Ascending aorta (tissue), 2 donors: ENCODE measurements at regions of chr10 and their contacts with region 1.

Region 1: GRCh38 chr10:63720072-63720537 is 198.9 kb downstream of the REEP3 start:
- DNase-seq: no peak
- H3K4me3 ChIP-seq: peak overlapping the region in 1 of 2 donors; percentile 16
- H3K27ac ChIP-seq: peak overlapping the region; percentile 86 to 91
- H3K4me1 ChIP-seq: peaks cover 0 to 14% of the 10 kb centered on the region in 2 donors
- H3K27me3 ChIP-seq: no peaks in the 10 kb centered on the region
- CTCF ChIP-seq: peak; percentile 87 to 99 (median 97)

Region 2: GRCh38 chr10:63166742-63167258 is 553.3 kb before region 1 on chr10:
- intact Hi-C with region 1: loop called (anchors 2 kb)
- DNase-seq: no peak
- H3K4me3 ChIP-seq: no peak overlapping the region
- H3K27ac ChIP-seq: no peak overlapping the region
- H3K4me1 ChIP-seq: no peaks in the 10 kb centered on the region
- H3K27me3 ChIP-seq: no peaks in the 10 kb centered on the region
- CTCF ChIP-seq: peak; percentile 61 to 90 (median 88)

Region 3: GRCh38 chr10:63217120-63217605 is 502.9 kb before region 1 on chr10:
- intact Hi-C with region 1: loop called (anchors 5 kb)
- DNase-seq: no peak
- H3K4me3 ChIP-seq: no peak overlapping the region
- H3K27ac ChIP-seq: no peak overlapping the region
- H3K4me1 ChIP-seq: no peaks in the 10 kb centered on the region
- H3K27me3 ChIP-seq: no peaks in the 10 kb centered on the region
- CTCF ChIP-seq: peak; percentile 49 to 70 (median 56)

Region 4: GRCh38 chr10:63767138-63767801 is 47.2 kb after region 1 on chr10:
- intact Hi-C with region 1: loop called (anchors 2 kb)
- DNase-seq: no peak
- H3K4me3 ChIP-seq: no peak overlapping the region
- H3K27ac ChIP-seq: peak overlapping the region; percentile 15 to 54
- H3K4me1 ChIP-seq: peaks cover 5 to 14% of the 10 kb centered on the region in 2 donors
- H3K27me3 ChIP-seq: no peaks in the 10 kb centered on the region
- CTCF ChIP-seq: peak; percentile 37 to 46 (median 45)

Region 5: GRCh38 chr10:63798599-63799498 is 78.7 kb after region 1 on chr10:
- intact Hi-C with region 1: loop called (anchors 1 kb)
- DNase-seq: peak; percentile 58 to 91
- H3K4me3 ChIP-seq: peak overlapping the region in 1 of 2 donors; percentile 35
- H3K27ac ChIP-seq: peak overlapping the region; percentile 73 to 74
- H3K4me1 ChIP-seq: peaks cover 5 to 18% of the 10 kb centered on the region in 2 donors
- H3K27me3 ChIP-seq: no peaks in the 10 kb centered on the region
- CTCF ChIP-seq: peak in 1 of 3 experiments; percentile 24

Region 6: GRCh38 chr10:63819753-63820329 is 99.7 kb after region 1 on chr10:
- intact Hi-C with region 1: loop called (anchors 2 kb)
- DNase-seq: peak in 1 of 2 donors; percentile 81
- H3K4me3 ChIP-seq: no peak overlapping the region
- H3K27ac ChIP-seq: no peak overlapping the region
- H3K4me1 ChIP-seq: no peaks in the 10 kb centered on the region
- H3K27me3 ChIP-seq: no peaks in the 10 kb centered on the region
- CTCF ChIP-seq: peak; percentile 46 to 79 (median 74)

Region 7: DNA sequence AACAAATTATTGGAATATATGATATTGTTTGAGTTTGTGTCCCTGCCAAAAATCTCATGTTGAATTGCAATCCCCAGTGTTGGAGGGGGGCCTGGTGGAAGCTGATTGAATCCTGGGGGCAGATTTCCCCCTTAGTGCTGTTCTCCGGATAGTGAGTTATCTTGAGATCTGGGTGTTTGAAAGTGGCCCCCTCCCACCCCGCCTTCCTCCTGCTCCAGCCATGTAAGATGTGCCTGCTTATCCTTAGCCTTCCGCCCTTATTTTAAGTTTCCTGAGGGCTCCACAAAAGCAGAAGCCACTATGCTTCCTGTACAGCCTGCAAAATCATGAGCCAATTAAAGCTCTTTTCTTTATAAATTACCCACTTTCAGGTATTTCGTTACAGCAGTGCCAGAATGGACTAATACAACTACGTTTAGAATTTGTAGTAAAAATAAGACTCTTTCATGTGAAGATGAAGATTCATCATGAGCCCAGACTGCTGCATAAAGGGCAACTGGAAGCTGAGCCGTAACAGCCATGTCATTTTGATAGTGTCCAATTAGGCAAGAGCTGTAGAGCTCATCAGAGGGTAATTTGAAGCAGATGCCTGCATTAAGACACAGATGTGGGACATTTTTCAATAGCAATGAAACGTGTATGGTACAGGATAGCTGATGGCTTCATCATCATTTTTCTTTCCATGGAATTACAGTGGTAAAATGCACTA is 808.3 kb after region 1 on chr10:
- intact Hi-C with region 1: no loop called
- DNase-seq: no peak
- H3K4me3 ChIP-seq: no peak overlapping the region
- H3K27ac ChIP-seq: no peak overlapping the region
- H3K4me1 ChIP-seq: no peaks in the 10 kb centered on the region
- H3K27me3 ChIP-seq: no peaks in the 10 kb centered on the region
- CTCF ChIP-seq: no peak